A549 (cell line): ENCODE measurements at regions of chr5 and their contacts with region 1.

Region 1: GRCh38 chr5:172293054-172293744 is 9.6 kb upstream of the UBTD2 start:
- DNase-seq: peak; percentile 58 to 73
- ATAC-seq: peak; percentile 99
- H3K4me3 ChIP-seq: no peak overlapping the region
- H3K27ac ChIP-seq: 0 out of 6 replicates have a peak overlapping the region, but pooled peaks of 1 of the 2 experiments have one; percentile 2
- H3K4me1 ChIP-seq: no peaks in the 10 kb centered on the region; the same call in 2 of the 3 replicates
- CTCF ChIP-seq: peak; percentile 93
- EP300 ChIP-seq: no peak
- POLR2A ChIP-seq: no peak
- RAD21 ChIP-seq: peak; percentile 87 to 96

Region 2: GRCh38 chr5:172303572-172304335 is 10.6 kb after region 1 on chr5:
- CTCF ChIA-PET with region 1: interaction called, 32 read pairs
- POLR2A ChIA-PET with region 1: no interaction called
- DNase-seq: no peak
- ATAC-seq: peak; percentile 32 to 47; a peak in 1 of 6 replicates
- H3K4me3 ChIP-seq: no peak overlapping the region
- H3K27ac ChIP-seq: no peak overlapping the region
- H3K4me1 ChIP-seq: no peaks in the 10 kb centered on the region
- CTCF ChIP-seq: no peak
- EP300 ChIP-seq: no peak
- POLR2A ChIP-seq: no peak
- RAD21 ChIP-seq: no peak